Activated T-helper 2 cell treated with anti-CD3 and anti-CD28 coated beads, Interferon-gamma antibody, Interleukin-2, Interleukin-4, amounts not matched to agents 10 μg/mL and 5 μg/mL and 100 μg/mL, durations not matched to agents 14 hours and 24 hours and 36 hours (primary cell): ENCODE measurements at regions of chr6 and their contacts with region 1.

Region 1: DNA sequence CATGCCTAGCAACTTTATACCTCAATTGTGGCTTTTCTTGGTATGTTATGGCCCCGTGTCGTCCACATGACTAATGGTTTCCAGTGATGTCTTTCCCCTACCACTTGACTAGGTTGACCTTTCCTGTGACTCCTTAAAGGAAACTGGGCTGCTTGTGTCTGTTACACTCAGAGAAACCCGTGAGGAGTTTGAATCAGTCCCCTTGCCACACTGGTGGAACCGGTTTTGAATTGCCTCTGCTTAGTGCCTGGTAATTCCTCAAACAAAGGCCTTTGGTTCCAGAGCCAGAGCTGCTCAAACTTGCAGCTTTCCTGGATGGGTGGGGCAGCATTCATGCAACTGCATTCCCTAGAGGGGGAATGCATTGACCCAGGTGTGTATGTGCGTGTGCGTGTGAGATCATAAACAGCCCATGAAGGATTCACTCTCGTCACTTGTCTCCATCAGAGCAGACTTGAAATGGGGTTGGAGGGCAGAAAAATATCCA is 22.0 kb downstream of the ECT2L start:
- DNase-seq: no peak
- H3K4me3 Mint-ChIP-seq: peak overlapping the region; percentile 61
- H3K27ac Mint-ChIP-seq: peak overlapping the region; percentile 94
- H3K4me1 Mint-ChIP-seq: peaks cover 41% of the 10 kb centered on the region
- H3K27me3 Mint-ChIP-seq: no peaks in the 10 kb centered on the region

Region 2: GRCh38 chr6:138891255-138891986 is 73.6 kb after region 1 on chr6:
- intact Hi-C with region 1: loop called (anchors 5 kb)
- DNase-seq: no peak
- H3K4me3 Mint-ChIP-seq: no peak overlapping the region
- H3K27ac Mint-ChIP-seq: no peak overlapping the region
- H3K4me1 Mint-ChIP-seq: no peaks in the 10 kb centered on the region
- H3K27me3 Mint-ChIP-seq: no peaks in the 10 kb centered on the region

Region 3: DNA sequence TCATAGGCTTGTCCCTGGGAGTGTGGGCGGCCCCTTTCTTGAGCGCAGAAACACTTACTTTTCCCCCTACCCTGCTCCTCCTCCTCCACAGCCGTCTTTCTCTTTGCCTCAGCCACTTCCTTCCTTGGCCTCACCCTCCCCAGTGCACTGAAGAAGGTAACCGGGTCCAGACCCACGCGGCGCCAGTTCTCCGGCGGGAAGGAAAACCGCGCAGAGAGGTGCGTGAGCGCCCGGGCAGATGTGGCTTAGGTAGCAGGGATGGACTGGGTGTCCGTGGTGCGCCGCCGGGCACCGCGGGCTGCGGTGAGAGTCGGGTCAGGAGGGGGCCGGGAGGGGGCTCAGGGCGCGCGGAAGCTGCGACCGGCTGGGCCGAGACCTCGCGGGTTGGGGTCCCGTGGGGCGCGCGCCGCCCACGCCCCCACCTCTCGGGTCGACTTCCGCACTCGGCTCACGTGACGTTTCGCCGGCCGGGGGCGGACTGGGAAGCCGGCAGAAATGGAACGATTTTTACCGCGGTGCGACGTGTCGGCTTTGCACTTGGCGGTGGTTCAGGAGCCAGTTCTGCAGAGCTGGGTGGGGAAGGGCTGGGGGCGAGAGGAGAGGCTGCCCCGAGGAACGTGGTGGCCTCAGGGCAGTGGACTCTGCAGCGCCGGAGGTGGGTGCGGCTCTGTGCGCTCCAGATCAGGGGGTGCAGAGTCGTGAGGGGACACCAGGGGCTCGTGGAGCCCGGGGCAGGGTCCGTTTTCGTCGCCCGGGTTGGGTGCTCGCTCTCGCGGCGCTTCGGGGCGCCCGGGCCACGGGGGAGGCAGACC is 211.0 kb after region 1 on chr6 and contains the start of gene ABRACL:
- intact Hi-C with region 1: loop called (anchors 1 kb)
- DNase-seq: peak; percentile 77
- H3K4me3 Mint-ChIP-seq: peak within 1 kb of the TSS; percentile 93
- H3K27ac Mint-ChIP-seq: peak within 1 kb of the TSS; percentile 89
- H3K4me1 Mint-ChIP-seq: peaks cover 17% of the 10 kb centered on the region
- H3K27me3 Mint-ChIP-seq: no peaks in the 10 kb centered on the region
- total RNA-seq, gene ABRACL: 151 and 161 TPM in 2 replicates

Region 4: GRCh38 chr6:139161817-139162284 is 344.0 kb after region 1 on chr6:
- intact Hi-C with region 1: loop called (anchors 5 kb)
- DNase-seq: peak; percentile 65
- H3K4me3 Mint-ChIP-seq: peak overlapping the region; percentile 65
- H3K27ac Mint-ChIP-seq: peak overlapping the region; percentile 99
- H3K4me1 Mint-ChIP-seq: peaks cover 61% of the 10 kb centered on the region
- H3K27me3 Mint-ChIP-seq: no peaks in the 10 kb centered on the region

Region 5: DNA sequence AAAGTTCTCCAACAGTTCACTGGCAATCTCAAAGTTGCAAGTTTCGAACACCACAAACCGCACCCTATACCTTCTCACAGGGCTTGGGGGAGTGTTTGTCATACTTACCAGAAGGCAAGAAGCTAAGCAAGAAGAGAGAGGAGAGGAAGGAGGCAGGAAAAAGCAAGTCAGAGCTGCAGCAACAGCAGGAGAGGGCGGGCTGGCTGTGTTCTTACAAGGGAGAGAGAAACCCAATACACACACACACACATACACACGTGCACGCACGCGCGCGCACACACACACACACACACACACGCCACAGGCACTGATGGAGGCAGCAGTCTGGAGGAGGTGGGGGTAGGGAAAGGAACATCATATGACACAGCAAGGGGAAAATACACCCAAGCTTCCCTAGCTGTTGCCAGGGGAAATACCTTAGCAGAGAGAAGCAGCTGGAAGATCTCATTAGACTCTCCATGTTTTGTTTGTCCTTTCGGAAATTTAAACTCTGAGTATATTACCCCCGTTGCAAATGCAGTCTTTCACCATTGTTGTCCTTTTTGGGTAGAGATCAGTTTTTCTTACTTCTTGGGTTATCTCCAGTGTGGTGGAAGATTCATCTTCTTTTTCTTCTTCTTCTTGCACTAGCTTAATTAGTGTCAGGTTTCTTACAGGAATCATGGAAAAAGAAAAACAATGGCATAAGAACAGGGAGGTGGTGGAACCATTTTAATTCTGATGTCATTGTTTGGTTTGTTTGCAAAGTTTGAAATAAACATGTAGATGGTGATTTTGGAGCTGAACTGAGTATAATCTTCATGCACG is 474.2 kb after region 1 on chr6 and contains the start of gene TXLNB:
- intact Hi-C with region 1: loop called (anchors 2 kb)
- DNase-seq: peak; percentile 81
- H3K4me3 Mint-ChIP-seq: peak within 1 kb of the TSS; percentile 76
- H3K27ac Mint-ChIP-seq: peak within 1 kb of the TSS; percentile 99
- H3K4me1 Mint-ChIP-seq: peaks cover 40% of the 10 kb centered on the region
- H3K27me3 Mint-ChIP-seq: no peaks in the 10 kb centered on the region
- total RNA-seq, gene TXLNB: 0.05 TPM in 1 of 2 replicates, not detected in the other